Breast epithelium (tissue), 4 donors: ENCODE measurements at regions of chr12 and their contacts with region 1.

Region 1: DNA sequence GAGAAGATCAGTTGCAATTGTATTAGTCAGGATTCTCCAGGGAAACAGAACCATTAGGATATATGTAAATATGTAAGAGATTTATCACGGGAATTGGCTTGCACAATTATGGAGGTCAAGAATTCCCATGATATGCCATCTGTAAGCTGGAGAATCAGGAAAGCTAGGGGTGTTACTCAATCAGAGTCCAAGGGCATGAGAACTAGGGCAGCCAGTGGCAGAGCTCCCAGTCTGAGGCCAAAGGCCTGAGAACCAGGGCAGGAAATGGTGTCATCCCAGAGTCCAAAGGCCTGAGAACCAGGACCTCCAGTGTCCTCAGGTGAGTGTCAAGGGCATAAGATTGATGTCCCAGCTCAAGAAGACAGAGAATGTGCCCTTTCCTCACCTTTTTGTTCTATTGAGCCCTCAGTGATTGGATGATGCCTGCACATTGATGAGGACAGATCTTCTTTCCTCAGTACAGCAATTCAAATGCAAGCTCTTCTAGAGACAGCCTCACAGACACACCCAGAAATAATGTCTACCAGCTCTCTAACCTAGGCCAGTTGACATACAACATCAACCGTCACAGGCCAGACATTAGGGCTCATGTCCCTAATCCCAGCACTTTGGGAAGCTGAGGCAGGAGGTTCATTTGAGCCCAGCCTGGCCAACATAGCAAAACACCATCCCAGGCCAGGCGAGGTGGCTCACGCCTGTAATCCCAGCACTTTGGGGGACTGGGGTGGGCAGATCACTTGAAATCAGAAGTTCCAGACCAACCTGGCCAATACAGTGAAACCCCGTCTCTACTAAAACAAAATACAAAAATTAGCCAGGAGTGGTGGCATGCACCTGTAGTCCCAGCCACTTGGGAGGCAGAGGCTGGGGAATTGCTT is 34.9 kb upstream of the ZNF740 start:
- DNase-seq: no peak
- H3K4me3 ChIP-seq: no peak overlapping the region
- H3K27ac ChIP-seq: no peak overlapping the region
- H3K4me1 ChIP-seq: no peaks in the 10 kb centered on the region
- H3K27me3 ChIP-seq: no peaks in the 10 kb centered on the region
- CTCF ChIP-seq: no peak
- POLR2A ChIP-seq: no peak

Region 2: DNA sequence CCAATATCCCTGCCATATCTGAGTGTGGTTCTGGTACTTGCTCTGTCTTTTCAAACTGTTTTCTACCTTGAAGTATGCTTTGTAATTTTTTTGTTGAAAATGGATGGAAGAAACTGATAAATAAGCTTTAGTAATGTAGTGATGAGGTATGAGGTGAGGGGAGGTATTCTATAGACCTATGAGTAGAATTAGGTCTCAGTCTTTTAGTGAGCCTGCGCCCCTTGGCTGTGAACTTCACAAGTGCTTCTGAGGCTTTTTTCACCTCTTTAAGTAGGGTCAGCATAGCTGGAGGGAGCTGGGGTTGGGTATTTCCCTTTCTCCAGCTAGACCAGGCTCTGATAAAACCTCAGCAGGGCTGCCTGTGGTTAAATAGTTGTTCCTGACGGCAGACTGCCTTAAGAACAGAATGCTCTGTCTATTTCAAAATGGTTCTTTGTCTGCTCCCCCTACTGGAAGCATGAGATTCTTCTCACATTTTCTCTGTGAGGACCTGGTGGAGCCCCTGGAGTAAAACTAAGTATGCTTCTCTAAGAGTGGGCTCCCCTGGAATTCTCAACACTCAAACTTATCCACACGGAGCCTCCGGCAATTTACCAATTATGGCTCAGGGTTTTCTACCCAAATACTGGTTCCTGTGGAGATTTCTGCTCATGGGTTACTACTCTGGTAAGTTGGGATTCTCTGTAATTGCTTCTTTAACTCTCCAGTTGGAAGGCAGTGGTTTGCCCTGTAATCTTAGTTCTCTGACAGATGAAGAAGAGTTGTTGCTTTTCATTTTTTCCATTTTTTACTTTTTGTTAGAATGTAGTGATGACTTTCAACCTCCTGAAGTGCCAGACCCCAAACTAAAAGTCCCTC is 638.5 kb before region 1 on chr12:
- intact Hi-C with region 1: loop called (anchors 10 kb)
- DNase-seq: peak in 1 of 2 donors; percentile 42
- H3K4me3 ChIP-seq: no peak overlapping the region
- H3K27ac ChIP-seq: peak overlapping the region in 1 of 2 donors; percentile 52
- H3K4me1 ChIP-seq: no peaks in the 10 kb centered on the region
- H3K27me3 ChIP-seq: no peaks in the 10 kb centered on the region
- CTCF ChIP-seq: peak; percentile 22 to 73 (median 51)
- POLR2A ChIP-seq: no peak

Region 3: GRCh38 chr12:52837413-52837741 is 308.2 kb before region 1 on chr12:
- intact Hi-C with region 1: no loop called
- DNase-seq: no peak
- H3K4me3 ChIP-seq: no peak overlapping the region
- H3K27ac ChIP-seq: no peak overlapping the region
- H3K4me1 ChIP-seq: no peaks in the 10 kb centered on the region
- H3K27me3 ChIP-seq: no peaks in the 10 kb centered on the region
- CTCF ChIP-seq: no peak
- POLR2A ChIP-seq: no peak

Region 4: GRCh38 chr12:53599579-53599978 is 454.0 kb after region 1 on chr12:
- intact Hi-C with region 1: no loop called
- DNase-seq: no peak
- H3K4me3 ChIP-seq: no peak overlapping the region
- H3K27ac ChIP-seq: no peak overlapping the region
- H3K4me1 ChIP-seq: peaks cover 0 to 4% of the 10 kb centered on the region in 2 donors
- H3K27me3 ChIP-seq: no peaks in the 10 kb centered on the region
- CTCF ChIP-seq: peak in 2 of 3 donors; percentile 15 to 22
- POLR2A ChIP-seq: no peak